Adrenal gland (tissue), 19 donors: ENCODE measurements at regions of chr18 and their contacts with region 1.

Region 1: GRCh38 chr18:34787931-34788532 is 77.9 kb downstream of the DTNA start:
- DNase-seq: peak; percentile 13 to 64 (median 40)
- H3K4me3 ChIP-seq: no peak overlapping the region
- H3K27ac ChIP-seq: no peak overlapping the region
- H3K4me1 ChIP-seq: no peaks in the 10 kb centered on the region
- H3K27me3 ChIP-seq: no peaks in the 10 kb centered on the region
- CTCF ChIP-seq: peak; percentile 75 to 85 (median 82)
- POLR2A ChIP-seq: no peak

Region 2: DNA sequence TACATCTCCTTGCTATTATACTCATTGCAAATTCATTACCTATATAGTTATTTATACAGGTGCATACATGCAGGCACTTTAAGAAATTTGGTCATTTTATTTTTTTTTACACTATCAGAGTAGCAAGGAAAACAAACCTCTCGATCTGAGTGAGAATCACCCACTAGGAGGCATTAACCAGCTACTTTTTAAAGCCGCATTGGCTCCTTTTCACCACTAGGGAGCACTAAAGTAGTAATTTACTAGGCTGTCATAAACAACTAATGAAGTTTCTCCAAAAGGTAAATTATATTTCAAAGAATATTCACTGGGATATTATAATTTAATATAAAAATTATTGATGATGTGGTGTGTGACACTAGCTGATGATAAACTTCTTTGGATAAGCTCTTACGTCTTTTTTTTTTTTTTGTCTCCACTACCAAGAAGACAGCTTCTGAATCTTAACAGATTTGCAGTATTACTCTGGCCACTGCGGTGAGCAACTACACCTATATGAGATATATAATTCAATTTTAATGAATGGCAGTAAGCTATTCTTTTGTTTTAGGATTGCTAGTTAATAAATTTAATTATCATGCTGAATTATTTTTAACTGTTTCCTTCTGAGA is 665.2 kb before region 1 on chr18:
- intact Hi-C with region 1: loop called in 1 of 2 experiments (anchors 10 kb)
- DNase-seq: peak; percentile 8 to 62 (median 27)
- H3K4me3 ChIP-seq: no peak overlapping the region
- H3K27ac ChIP-seq: no peak overlapping the region
- H3K4me1 ChIP-seq: no peaks in the 10 kb centered on the region
- H3K27me3 ChIP-seq: no peaks in the 10 kb centered on the region
- CTCF ChIP-seq: peak; percentile 56 to 84 (median 74)
- POLR2A ChIP-seq: no peak

Region 3: GRCh38 chr18:34431042-34431441 is 357.0 kb before region 1 on chr18:
- intact Hi-C with region 1: no loop called
- DNase-seq: no peak
- H3K4me3 ChIP-seq: no peak overlapping the region
- H3K27ac ChIP-seq: no peak overlapping the region
- H3K4me1 ChIP-seq: no peaks in the 10 kb centered on the region
- H3K27me3 ChIP-seq: no peaks in the 10 kb centered on the region
- CTCF ChIP-seq: no peak
- POLR2A ChIP-seq: no peak

Region 4: DNA sequence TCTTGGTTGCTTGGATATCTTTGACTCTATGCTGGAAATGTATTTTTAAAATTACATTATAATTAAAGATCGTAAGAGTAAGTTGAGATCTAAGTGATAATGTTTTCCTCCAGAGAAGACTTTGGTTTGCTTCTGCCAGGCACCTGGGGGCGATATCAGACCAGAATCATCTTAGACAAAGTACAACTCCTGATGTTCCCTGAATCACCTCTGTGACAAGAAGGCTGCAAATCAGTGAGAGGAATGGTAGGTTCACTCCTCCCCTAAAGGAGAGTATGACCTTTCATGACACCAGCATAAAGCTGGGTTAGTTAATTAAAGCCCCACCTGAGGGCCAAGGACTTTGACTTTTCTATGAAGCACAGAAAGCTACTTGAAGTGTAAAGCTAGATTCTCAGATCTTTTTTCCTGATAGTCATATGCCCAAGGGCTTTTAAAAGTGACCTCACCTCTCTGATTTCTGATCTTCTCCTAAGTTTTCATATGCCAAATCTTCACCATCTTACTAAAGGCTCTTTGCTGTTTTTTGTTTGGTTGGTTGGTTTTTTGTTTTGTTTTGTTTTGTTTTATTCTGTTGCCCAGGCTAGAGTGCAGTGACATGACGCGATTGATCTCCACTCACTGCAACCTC is 192.2 kb before region 1 on chr18:
- intact Hi-C with region 1: loop called in 1 of 2 experiments (anchors 5 kb)
- DNase-seq: peak in 6 of 7 donors; percentile 15 to 55 (median 38)
- H3K4me3 ChIP-seq: no peak overlapping the region
- H3K27ac ChIP-seq: no peak overlapping the region
- H3K4me1 ChIP-seq: peaks cover 0 to 1% of the 10 kb centered on the region in 2 donors
- H3K27me3 ChIP-seq: no peaks in the 10 kb centered on the region
- CTCF ChIP-seq: peak; percentile 27 to 52 (median 44)
- POLR2A ChIP-seq: no peak

Region 5: GRCh38 chr18:34676816-34677574 is 111.0 kb before region 1 on chr18:
- intact Hi-C with region 1: loop called in 1 of 2 experiments (anchors 10 kb)
- DNase-seq: no peak
- H3K4me3 ChIP-seq: no peak overlapping the region
- H3K27ac ChIP-seq: no peak overlapping the region
- H3K4me1 ChIP-seq: no peaks in the 10 kb centered on the region
- H3K27me3 ChIP-seq: no peaks in the 10 kb centered on the region
- CTCF ChIP-seq: no peak
- POLR2A ChIP-seq: no peak

Region 6: GRCh38 chr18:34729264-34729663 is 58.8 kb before region 1 on chr18:
- intact Hi-C with region 1: loop called in 1 of 2 experiments (anchors 10 kb)
- DNase-seq: peak in 3 of 7 donors; percentile 12 to 30 (median 13)
- H3K4me3 ChIP-seq: no peak overlapping the region
- H3K27ac ChIP-seq: peak overlapping the region in 1 of 5 donors; percentile 47
- H3K4me1 ChIP-seq: no peaks in the 10 kb centered on the region
- H3K27me3 ChIP-seq: no peaks in the 10 kb centered on the region
- CTCF ChIP-seq: peak; percentile 25 to 40 (median 35)
- POLR2A ChIP-seq: no peak